GM10248 (cell line): ENCODE measurements at regions of chr16 and their contacts with region 1.

Region 1: DNA sequence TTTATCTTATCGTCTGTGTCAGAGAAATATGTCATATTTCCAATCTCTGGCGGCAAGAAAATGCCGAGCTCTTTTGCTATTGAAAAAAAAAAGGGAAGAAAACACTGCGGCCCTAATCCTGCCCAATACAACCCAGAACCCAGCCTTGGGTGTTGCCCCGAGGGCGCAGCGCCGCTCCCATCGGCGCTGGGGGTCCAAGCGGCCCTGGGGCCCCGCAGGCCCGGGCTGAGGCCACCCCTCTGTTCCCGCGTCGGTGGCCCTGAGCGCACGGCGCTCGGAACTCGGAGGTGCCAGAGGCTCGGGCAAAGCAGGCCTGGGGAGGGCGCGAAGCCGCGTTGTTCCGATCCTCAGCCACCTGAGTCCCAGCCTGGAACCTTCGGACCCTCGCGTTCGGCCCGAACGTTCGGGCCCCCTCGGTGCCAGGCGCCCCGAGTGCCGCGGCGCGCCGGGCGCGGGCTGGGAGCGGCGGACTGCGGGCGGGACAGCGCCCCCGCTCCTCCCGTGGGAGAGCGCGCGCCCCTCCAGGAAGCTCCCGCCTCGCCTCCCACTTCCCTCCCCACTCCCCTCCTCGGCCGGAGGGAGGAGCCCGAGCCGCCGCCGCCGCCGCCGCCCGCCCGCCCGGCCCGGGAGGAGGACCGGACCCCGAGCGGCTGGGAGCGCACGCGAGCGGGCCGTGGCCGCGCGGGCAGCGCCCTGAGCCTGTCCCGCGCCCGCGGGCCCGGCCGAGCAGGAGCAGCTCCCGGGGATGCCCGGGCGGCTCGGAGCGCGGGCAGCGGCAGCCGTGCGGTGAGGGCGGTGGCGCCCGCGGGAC is at the start of gene CPNE2:
- DNase-seq: peak; percentile 73
- CTCF ChIP-seq: peak; percentile 44

Region 2: GRCh38 chr16:56708525-56709442 is 383.4 kb before region 1 on chr16:
- CTCF ChIA-PET with region 1: no interaction called
- POLR2A ChIA-PET with region 1: no interaction called
- DNase-seq: no peak
- CTCF ChIP-seq: no peak

Region 3: GRCh38 chr16:56833243-56833970 is 258.8 kb before region 1 on chr16:
- CTCF ChIA-PET with region 1: no interaction called
- POLR2A ChIA-PET with region 1: no interaction called
- DNase-seq: no peak
- CTCF ChIP-seq: no peak

Region 4: GRCh38 chr16:57077714-57078113 is 14.5 kb before region 1 on chr16:
- CTCF ChIA-PET with region 1: interaction called, 92 read pairs
- POLR2A ChIA-PET with region 1: no interaction called
- DNase-seq: no peak
- CTCF ChIP-seq: no peak

Region 5: GRCh38 chr16:57115514-57116182 is 23.5 kb after region 1 on chr16:
- CTCF ChIA-PET with region 1: interaction called, 41 read pairs
- POLR2A ChIA-PET with region 1: no interaction called
- DNase-seq: no peak
- CTCF ChIP-seq: no peak

Region 6: DNA sequence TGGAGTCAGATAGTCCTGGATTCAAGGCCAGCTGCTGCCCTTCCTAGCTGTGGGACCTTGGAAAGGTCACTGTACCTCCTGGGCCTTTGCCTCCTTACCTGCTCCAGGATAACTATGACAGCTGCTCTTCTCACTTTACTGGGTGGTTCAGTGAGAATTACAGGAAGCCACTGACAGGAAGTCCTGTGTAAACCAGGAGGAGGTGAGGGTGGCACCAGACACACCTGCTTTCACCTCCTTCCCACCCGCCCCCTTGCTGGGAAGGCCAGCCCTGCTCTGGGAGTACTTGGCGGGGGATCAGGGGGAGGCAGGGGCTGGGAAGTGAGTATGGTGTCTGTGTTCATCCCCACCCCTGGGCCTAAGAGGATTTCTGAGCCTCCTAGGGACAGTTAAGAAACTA is 42.8 kb after region 1 on chr16:
- CTCF ChIA-PET with region 1: interaction called, 14 read pairs
- POLR2A ChIA-PET with region 1: no interaction called
- DNase-seq: no peak
- CTCF ChIP-seq: no peak

Region 7: DNA sequence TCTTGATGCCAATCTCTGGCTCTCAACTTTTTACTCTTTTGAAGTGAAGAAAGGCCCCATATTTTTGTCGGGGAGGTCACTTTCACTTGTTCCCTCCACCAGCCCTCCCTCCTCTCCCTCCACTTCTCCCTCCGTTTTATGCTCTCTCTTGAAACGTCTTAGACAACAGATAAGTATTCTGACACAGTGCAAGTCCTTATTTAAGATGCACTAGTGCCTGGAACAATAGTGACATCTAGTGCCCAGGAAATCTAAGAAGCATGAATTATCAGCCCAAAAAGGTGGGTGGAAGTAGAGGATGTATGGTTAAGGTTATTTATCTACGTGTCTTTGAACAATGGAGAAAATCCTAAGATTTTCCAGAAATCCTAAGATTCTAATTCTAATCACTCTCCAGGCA is 75.8 kb after region 1 on chr16:
- CTCF ChIA-PET with region 1: interaction called, 14 read pairs
- POLR2A ChIA-PET with region 1: no interaction called
- DNase-seq: peak; percentile 54
- CTCF ChIP-seq: peak; percentile 62